Esophagus muscularis mucosa (tissue), 4 donors: ENCODE measurements at regions of chr17 and their contacts with region 1.

Region 1: GRCh38 chr17:1122533-1123392 is 57.0 kb downstream of the ABR start:
- DNase-seq: peak; percentile 97
- H3K4me3 ChIP-seq: no peak overlapping the region
- H3K27ac ChIP-seq: peak overlapping the region; percentile 47 to 62 (median 56)
- H3K4me1 ChIP-seq: peaks cover 25 to 41% (median 28%) of the 10 kb centered on the region in 4 donors
- H3K27me3 ChIP-seq: no peaks in the 10 kb centered on the region
- CTCF ChIP-seq: peak; percentile 86 to 99 (median 97)
- EP300 ChIP-seq: no peak
- POLR2A ChIP-seq: no peak

Region 2: GRCh38 chr17:534071-534691 is 588.6 kb before region 1 on chr17:
- intact Hi-C with region 1: no loop called
- DNase-seq: no peak
- H3K4me3 ChIP-seq: no peak overlapping the region
- H3K27ac ChIP-seq: no peak overlapping the region
- H3K4me1 ChIP-seq: peaks cover 0 to 12% (median 3%) of the 10 kb centered on the region in 4 donors
- H3K27me3 ChIP-seq: no peaks in the 10 kb centered on the region
- CTCF ChIP-seq: no peak
- EP300 ChIP-seq: no peak
- POLR2A ChIP-seq: no peak

Region 3: GRCh38 chr17:1186923-1187771 is 64.4 kb after region 1 on chr17:
- intact Hi-C with region 1: loop called (anchors 1 kb)
- DNase-seq: peak; percentile 92
- H3K4me3 ChIP-seq: peak overlapping the region; percentile 32 to 43 (median 36)
- H3K27ac ChIP-seq: peak overlapping the region; percentile 71 to 83 (median 77)
- H3K4me1 ChIP-seq: peaks cover 52 to 61% (median 55%) of the 10 kb centered on the region in 4 donors
- H3K27me3 ChIP-seq: no peaks in the 10 kb centered on the region
- CTCF ChIP-seq: peak; percentile 95 to 98 (median 97)
- EP300 ChIP-seq: no peak
- POLR2A ChIP-seq: no peak